ENCODE measurements at regions of chr19 and their contacts with region 1.

Region 1: DNA sequence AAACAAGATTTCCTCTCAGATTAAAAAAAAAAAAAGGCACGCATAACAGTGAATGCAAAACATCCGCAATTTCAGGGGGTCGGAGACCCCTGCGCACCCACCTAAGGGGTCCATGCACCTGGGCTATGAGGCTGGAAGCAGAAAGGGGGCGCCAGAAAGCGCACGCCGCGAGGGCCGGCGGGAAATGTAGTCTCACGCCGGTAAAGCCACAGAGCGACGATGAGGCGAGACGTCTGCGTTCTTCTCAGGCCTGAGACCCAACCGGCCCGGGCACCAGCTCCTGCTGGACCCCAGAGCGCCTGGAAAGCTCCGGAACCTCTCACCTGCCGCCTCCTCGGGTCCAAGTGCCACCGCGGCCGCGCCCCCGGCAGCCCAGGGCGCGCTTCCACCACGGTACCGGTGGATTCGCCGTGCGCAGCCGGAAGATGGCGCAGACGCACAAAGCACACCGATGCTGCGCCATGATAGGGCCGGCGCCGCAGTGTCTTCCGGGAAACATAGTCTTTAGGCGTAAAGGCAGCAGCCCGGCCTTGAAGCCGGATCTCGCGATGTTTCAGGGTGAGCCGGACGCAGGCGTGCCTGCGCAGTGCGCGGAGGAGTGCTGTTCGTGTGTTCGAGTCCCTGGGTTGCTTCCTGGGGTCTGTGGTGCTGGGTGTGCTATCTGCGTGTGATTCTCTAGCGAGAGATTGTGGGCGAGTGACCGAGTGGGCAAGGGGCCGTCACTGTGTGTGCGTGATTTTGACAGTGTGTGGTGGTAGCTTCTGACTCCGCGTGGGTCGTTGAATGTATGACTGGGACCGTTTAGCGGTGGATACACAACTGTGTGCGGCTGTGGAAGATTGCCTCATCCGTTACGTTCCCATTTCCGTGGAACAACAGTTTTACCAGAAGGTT is at the start of gene ZNF582:
- DNase-seq: peak; percentile 90 to 94 (median 93)
- H3K4me3 ChIP-seq: peak within 1 kb of the TSS; percentile 73 to 87
- H3K4me3 Mint-ChIP-seq: peak within 1 kb of the TSS; percentile 88 to 100 (median 97)
- H3K27ac ChIP-seq: peak within 1 kb of the TSS; percentile 92
- H3K27ac Mint-ChIP-seq: peak within 1 kb of the TSS; percentile 83 to 100 (median 95)
- H3K4me1 ChIP-seq: peaks cover 8% of the 10 kb centered on the region
- H3K4me1 Mint-ChIP-seq: peaks cover 6 to 16% (median 7%) of the 10 kb centered on the region in 4 donors
- H3K27me3 ChIP-seq: no peaks in the 10 kb centered on the region
- H3K27me3 Mint-ChIP-seq: no peaks in the 10 kb centered on the region
- total RNA-seq, gene ZNF582: 7.3 to 7.8 TPM

Region 2: GRCh38 chr19:56066152-56067023 is 327.0 kb before region 1 on chr19:
- CTCF ChIA-PET with region 1: no interaction called
- POLR2A ChIA-PET with region 1: no interaction called
- intact Hi-C with region 1: no loop called
- DNase-seq: peak; percentile 50 to 61 (median 54)
- H3K4me3 ChIP-seq: peak overlapping the region in 1 of 2 donors; percentile 30
- H3K4me3 Mint-ChIP-seq: peak overlapping the region; percentile 64 to 77 (median 73)
- H3K27ac ChIP-seq: no peak overlapping the region
- H3K27ac Mint-ChIP-seq: peak overlapping the region in 4 of 7 donors; percentile 10 to 73 (median 24)
- H3K4me1 ChIP-seq: peaks cover 11% of the 10 kb centered on the region
- H3K4me1 Mint-ChIP-seq: peaks cover 3 to 13% (median 9%) of the 10 kb centered on the region in 4 donors
- H3K27me3 ChIP-seq: no peaks in the 10 kb centered on the region
- H3K27me3 Mint-ChIP-seq: peaks cover 22 to 31% of the 10 kb centered on the region in 2 donors

Region 3: GRCh38 chr19:56140583-56141416 is 252.6 kb before region 1 on chr19 and contains the start of gene ZNF444:
- CTCF ChIA-PET with region 1: no interaction called
- POLR2A ChIA-PET with region 1: no interaction called
- intact Hi-C with region 1: loop called (anchors 1 kb)
- DNase-seq: peak; percentile 99 to 100 (median 99)
- H3K4me3 ChIP-seq: peak within 1 kb of the TSS; percentile 71 to 96
- H3K4me3 Mint-ChIP-seq: peak within 1 kb of the TSS; percentile 87 to 98 (median 94)
- H3K27ac ChIP-seq: peak within 1 kb of the TSS; percentile 73
- H3K27ac Mint-ChIP-seq: peak within 1 kb of the TSS; percentile 89 to 98 (median 96)
- H3K4me1 ChIP-seq: peaks cover 22% of the 10 kb centered on the region
- H3K4me1 Mint-ChIP-seq: peaks cover 24 to 46% (median 33%) of the 10 kb centered on the region in 4 donors
- H3K27me3 ChIP-seq: no peaks in the 10 kb centered on the region
- H3K27me3 Mint-ChIP-seq: no peaks in the 10 kb centered on the region
- total RNA-seq, gene ZNF444: 33.2 to 42.8 TPM

Region 4: GRCh38 chr19:56333505-56333904 is 59.9 kb before region 1 on chr19:
- CTCF ChIA-PET with region 1: no interaction called
- POLR2A ChIA-PET with region 1: no interaction called
- intact Hi-C with region 1: no loop called
- DNase-seq: peak in 4 of 5 donors; percentile 29 to 40 (median 40)
- H3K4me3 ChIP-seq: no peak overlapping the region
- H3K4me3 Mint-ChIP-seq: no peak overlapping the region
- H3K27ac ChIP-seq: no peak overlapping the region
- H3K27ac Mint-ChIP-seq: no peak overlapping the region
- H3K4me1 ChIP-seq: no peaks in the 10 kb centered on the region
- H3K4me1 Mint-ChIP-seq: no peaks in the 10 kb centered on the region
- H3K27me3 ChIP-seq: no peaks in the 10 kb centered on the region
- H3K27me3 Mint-ChIP-seq: peaks cover 3 to 6% of the 10 kb centered on the region in 2 donors

Region 5: DNA sequence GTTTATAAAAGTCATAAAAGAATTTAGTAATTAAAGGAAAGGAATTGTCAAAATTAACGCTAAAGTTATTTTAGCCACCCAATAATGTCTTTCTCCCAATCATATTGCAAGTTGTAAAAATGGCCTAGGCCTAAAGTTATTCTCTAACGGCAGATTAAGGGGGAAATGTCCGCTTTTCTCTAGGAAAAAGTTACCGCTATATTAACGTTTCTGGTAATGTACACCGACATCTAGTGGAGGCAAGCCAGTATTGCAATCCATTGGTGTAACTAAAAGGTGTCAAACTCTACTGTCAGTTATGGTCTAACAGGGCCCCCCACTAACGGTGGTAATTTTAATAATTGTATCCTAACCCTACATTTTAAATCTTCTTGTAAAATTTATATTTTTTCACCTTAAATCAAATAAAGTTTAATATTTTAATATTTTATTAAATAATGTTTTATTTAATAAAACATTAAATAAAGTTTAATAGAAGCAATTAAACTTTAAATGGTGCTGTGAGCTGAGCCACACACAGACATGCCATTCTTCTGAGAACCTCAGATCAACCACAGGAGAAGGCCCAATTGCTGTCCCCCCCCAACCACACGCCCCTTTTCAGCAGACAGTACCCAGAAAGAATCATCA is 42.8 kb before region 1 on chr19:
- CTCF ChIA-PET with region 1: no interaction called
- POLR2A ChIA-PET with region 1: no interaction called
- intact Hi-C with region 1: no loop called
- DNase-seq: peak; percentile 35 to 57 (median 46)
- H3K4me3 ChIP-seq: no peak overlapping the region
- H3K4me3 Mint-ChIP-seq: no peak overlapping the region
- H3K27ac ChIP-seq: no peak overlapping the region
- H3K27ac Mint-ChIP-seq: no peak overlapping the region
- H3K4me1 ChIP-seq: no peaks in the 10 kb centered on the region
- H3K4me1 Mint-ChIP-seq: peaks cover 0 to 1% (median 0%) of the 10 kb centered on the region in 4 donors
- H3K27me3 ChIP-seq: no peaks in the 10 kb centered on the region
- H3K27me3 Mint-ChIP-seq: peaks cover 1% of the 10 kb centered on the region in 2 donors

Region 6: DNA sequence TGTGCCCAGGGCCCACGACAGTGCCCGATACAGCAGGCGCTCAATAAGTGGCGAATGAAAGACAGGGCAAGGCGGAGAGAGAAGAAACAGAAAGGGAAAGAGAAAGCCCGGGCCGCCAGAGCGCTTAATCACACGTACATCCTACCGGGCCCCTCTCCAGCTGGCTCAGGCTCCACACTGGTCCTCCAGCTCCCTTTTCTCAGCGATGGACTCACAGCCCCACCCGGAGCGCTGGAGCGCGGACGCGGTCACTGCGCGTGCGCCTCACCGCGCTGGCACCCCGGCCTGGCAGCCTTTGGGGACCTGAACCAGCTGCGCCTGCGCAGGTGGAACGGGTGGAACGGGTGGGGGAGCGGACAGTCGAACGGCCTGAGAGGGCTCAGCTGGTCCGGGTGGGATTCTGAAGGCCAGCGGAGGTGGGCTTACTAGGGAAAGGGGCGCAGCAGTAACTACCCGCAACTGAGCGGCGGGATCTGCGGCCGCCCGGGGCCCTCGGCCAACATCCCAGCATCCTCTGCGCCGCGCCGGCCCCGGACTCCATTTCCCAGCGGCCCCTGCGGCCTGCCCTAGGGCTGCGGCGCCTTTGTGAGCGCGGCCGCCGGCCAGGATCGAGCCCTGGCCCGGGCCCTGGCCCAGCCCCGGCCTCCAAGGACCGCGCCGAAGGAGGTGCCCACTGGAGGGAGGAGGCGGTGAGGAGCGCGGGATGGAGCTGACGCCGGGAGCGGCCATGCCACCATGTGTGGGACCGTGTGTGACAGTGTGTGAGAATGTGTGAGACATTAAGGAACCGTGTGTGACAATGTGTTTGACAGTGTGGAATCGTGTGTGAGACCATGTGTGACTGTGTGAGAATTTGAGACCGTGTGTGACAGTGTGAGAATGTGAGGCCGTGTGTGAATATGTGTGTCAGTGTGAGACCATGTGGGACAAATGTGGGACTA is 10.7 kb after region 1 on chr19 and contains the start of gene ZNF583:
- CTCF ChIA-PET with region 1: interaction called, 7 read pairs
- POLR2A ChIA-PET with region 1: interaction called, 45 read pairs
- intact Hi-C with region 1: loop called (anchors 1 kb)
- DNase-seq: peak; percentile 90 to 94 (median 92)
- H3K4me3 ChIP-seq: peak within 1 kb of the TSS; percentile 77 to 96
- H3K4me3 Mint-ChIP-seq: peak within 1 kb of the TSS; percentile 93 to 99 (median 97)
- H3K27ac ChIP-seq: peak within 1 kb of the TSS; percentile 92
- H3K27ac Mint-ChIP-seq: peak within 1 kb of the TSS; percentile 88 to 99 (median 98)
- H3K4me1 ChIP-seq: peaks cover 21% of the 10 kb centered on the region
- H3K4me1 Mint-ChIP-seq: peaks cover 20 to 36% (median 26%) of the 10 kb centered on the region in 4 donors
- H3K27me3 ChIP-seq: no peaks in the 10 kb centered on the region
- H3K27me3 Mint-ChIP-seq: no peaks in the 10 kb centered on the region
- total RNA-seq, gene ZNF583: 9.2 to 14.4 TPM

Region 7: GRCh38 chr19:57191141-57192076 is 798.0 kb after region 1 on chr19 and contains the start of gene ZNF264:
- CTCF ChIA-PET with region 1: no interaction called
- POLR2A ChIA-PET with region 1: no interaction called
- intact Hi-C with region 1: loop called (anchors 5 kb)
- DNase-seq: peak; percentile 88 to 90 (median 88)
- H3K4me3 ChIP-seq: peak within 1 kb of the TSS; percentile 57 to 73
- H3K4me3 Mint-ChIP-seq: peak within 1 kb of the TSS; percentile 91 to 94 (median 93)
- H3K27ac ChIP-seq: peak within 1 kb of the TSS; percentile 77
- H3K27ac Mint-ChIP-seq: peak within 1 kb of the TSS; percentile 94 to 98 (median 96)
- H3K4me1 ChIP-seq: peaks cover 23% of the 10 kb centered on the region
- H3K4me1 Mint-ChIP-seq: peaks cover 19 to 54% (median 36%) of the 10 kb centered on the region in 4 donors
- H3K27me3 ChIP-seq: no peaks in the 10 kb centered on the region
- H3K27me3 Mint-ChIP-seq: peaks cover 6 to 7% of the 10 kb centered on the region in 2 donors
- total RNA-seq, gene ZNF264: 62.5 to 64.1 TPM

Region 8: DNA sequence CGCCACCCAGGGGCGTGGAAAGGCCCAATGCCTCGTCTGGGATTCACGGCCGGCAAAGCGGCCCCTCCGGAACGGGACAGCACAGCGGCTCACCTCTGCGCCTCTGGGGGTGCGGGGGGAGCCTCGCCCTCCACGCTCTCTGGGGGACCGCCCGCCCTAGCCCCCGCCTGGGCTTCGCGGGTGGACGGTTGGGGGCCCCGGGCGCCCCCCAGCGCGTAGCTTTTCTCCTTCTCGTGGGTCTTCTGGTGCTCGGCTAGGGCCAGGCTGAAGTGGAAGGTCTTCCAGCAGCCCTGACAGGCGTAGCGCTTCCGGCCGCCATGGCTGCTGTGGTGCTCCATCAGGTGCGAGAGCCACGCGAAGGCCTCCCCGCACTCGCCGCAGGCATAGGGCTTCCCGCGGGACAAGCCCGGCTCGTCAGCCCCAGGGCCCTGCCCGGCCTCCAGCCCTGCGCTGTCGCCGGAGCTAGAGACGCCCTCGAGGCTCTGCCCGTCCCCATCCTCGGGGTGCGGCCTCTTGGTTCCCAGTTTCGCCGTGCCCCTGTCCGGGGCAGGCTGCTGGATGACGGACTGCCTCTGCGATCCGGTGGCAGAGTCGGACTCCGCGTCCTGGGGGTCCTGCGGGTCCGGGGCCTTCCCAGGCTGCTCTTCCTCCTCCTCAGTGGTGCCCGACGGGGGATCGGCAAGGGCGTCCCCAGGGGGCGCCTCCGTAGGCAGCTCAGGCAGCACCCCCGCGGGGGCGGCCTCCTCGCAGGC is 1691.4 kb after region 1 on chr19:
- CTCF ChIA-PET with region 1: no interaction called
- POLR2A ChIA-PET with region 1: no interaction called
- intact Hi-C with region 1: no loop called
- DNase-seq: no peak
- H3K4me3 ChIP-seq: no peak overlapping the region
- H3K4me3 Mint-ChIP-seq: no peak overlapping the region
- H3K27ac ChIP-seq: no peak overlapping the region
- H3K27ac Mint-ChIP-seq: no peak overlapping the region
- H3K4me1 ChIP-seq: no peaks in the 10 kb centered on the region
- H3K4me1 Mint-ChIP-seq: no peaks in the 10 kb centered on the region
- H3K27me3 ChIP-seq: no peaks in the 10 kb centered on the region
- H3K27me3 Mint-ChIP-seq: no peaks in the 10 kb centered on the region